Activated naive CD4-positive, alpha-beta T cell treated with anti-CD3 and anti-CD28 coated beads for 36 hours (primary cell): ENCODE measurements at regions of chr6 and their contacts with region 1.

Region 1: GRCh38 chr6:159110013-159110412 is 59.2 kb upstream of the FNDC1 start:
- DNase-seq: peak; percentile 68
- H3K4me3 Mint-ChIP-seq: no peak overlapping the region
- H3K27ac Mint-ChIP-seq: no peak overlapping the region
- H3K4me1 Mint-ChIP-seq: peaks cover 44% of the 10 kb centered on the region
- H3K27me3 Mint-ChIP-seq: no peaks in the 10 kb centered on the region

Region 2: DNA sequence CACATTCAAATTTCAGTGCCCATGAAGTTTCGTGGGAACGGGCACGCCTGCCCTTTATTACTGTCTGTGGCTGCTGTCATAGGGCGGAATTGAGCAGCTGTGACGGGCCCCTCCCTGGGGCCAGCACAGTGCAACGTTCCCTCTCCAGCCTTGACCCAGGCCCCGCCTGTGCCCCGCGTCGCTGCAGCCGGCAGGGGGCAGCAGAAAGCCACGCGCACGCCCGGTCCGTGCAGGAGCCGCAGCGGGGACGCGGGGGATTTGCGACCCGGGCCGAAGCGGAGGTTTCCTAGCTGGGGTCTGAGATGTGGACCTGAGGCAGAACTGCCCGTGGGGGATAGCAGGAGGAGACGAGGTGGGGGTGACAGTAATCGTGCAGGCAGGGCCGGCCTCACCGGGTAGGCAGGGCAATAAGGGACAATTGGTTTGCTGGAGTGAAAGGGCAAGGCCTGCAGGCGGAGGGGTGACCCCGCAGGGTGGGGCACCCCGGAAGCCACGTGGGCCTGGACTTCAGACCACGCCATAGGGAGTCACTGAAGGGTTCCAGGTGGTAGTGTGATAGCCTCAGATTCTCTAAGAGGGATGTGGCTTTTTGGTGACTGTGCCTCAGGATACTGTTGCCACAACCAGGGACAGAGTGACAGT is 405.7 kb before region 1 on chr6:
- CTCF ChIA-PET with region 1: no interaction called
- intact Hi-C with region 1: loop called (anchors 1 kb)
- DNase-seq: peak; percentile 80
- H3K4me3 Mint-ChIP-seq: peak overlapping the region; percentile 58
- H3K27ac Mint-ChIP-seq: no peak overlapping the region
- H3K4me1 Mint-ChIP-seq: peaks cover 15% of the 10 kb centered on the region
- H3K27me3 Mint-ChIP-seq: no peaks in the 10 kb centered on the region

Region 3: DNA sequence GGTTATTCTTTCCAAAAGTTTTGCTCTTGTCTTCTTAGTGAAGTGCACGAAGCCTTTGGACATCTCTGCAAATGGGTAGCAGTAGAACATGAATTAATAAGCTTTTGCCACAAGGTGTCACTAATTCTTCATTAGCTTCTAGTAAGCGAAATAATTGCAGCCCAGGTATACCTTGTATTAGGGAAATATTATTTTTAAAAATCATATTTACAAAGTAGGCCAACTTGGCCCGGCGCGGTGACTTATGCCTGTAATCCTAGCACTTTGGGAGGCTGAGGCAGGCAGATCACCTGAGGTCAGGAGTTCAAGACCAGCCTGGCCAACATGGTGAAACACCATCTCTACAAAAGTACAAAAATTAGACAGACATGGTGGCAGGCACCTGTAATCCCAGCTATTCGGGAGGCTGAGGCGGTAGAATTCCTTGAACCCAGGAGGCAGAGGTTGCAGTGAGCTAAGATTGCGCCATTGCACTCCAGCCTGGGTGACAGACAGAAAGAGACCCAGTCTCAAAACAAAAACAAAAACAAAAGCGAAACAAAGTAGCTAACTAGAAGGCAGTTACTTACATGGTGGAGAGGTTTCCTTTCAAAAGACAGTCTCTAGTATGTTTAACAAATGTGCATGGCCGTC is 101.2 kb before region 1 on chr6:
- CTCF ChIA-PET with region 1: interaction called, 139 read pairs
- intact Hi-C with region 1: loop called (anchors 1 kb)
- DNase-seq: no peak
- H3K4me3 Mint-ChIP-seq: no peak overlapping the region
- H3K27ac Mint-ChIP-seq: no peak overlapping the region
- H3K4me1 Mint-ChIP-seq: peaks cover 29% of the 10 kb centered on the region
- H3K27me3 Mint-ChIP-seq: no peaks in the 10 kb centered on the region

Region 4: GRCh38 chr6:159151266-159151855 is 41.3 kb after region 1 on chr6:
- CTCF ChIA-PET with region 1: interaction called, 10 read pairs
- intact Hi-C with region 1: no loop called
- DNase-seq: peak; percentile 69
- H3K4me3 Mint-ChIP-seq: no peak overlapping the region
- H3K27ac Mint-ChIP-seq: no peak overlapping the region
- H3K4me1 Mint-ChIP-seq: peaks cover 2% of the 10 kb centered on the region
- H3K27me3 Mint-ChIP-seq: peaks cover 2% of the 10 kb centered on the region

Region 5: DNA sequence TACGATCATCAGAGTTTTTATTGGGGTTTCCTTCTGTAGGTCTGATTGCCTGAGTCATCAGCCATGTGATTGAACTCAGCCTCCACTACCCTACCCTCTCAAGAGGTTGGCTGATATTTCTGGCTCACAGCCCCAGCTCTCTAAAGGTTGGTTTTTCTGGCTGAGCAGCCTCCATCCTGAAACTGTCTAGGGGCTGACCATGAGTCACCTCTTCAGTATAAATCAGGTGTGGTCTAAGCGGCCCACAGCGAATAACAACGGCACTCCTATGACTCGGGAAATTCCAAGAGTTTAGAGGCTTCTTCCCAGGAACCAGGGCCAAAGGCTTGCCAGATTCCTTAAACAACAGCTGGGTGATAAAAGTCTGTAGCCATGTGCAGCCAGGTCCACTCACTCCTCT is 467.6 kb after region 1 on chr6:
- CTCF ChIA-PET with region 1: no interaction called
- intact Hi-C with region 1: no loop called
- DNase-seq: no peak
- H3K4me3 Mint-ChIP-seq: no peak overlapping the region
- H3K27ac Mint-ChIP-seq: no peak overlapping the region
- H3K4me1 Mint-ChIP-seq: no peaks in the 10 kb centered on the region
- H3K27me3 Mint-ChIP-seq: peaks cover 21% of the 10 kb centered on the region

Region 6: DNA sequence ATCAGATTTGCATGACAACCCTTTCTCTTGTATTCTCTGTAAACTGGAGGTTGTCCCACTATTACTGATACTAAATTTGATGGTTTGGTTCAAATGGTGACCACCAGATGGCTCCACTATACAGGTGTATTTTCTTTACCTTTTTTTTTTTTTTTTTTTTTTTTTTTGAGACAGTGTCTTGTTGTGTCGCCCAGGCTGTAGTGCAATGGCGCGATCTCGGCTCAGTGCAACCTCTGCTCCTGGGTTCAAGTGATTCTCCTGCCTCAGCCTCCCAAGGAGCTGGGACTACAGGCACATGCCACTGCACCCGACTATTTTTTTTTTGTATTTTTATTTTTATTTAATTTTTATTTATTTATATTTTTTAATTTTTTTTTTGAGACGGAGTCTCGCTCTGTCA is 610.7 kb after region 1 on chr6:
- CTCF ChIA-PET with region 1: no interaction called
- intact Hi-C with region 1: no loop called
- DNase-seq: peak; percentile 67
- H3K4me3 Mint-ChIP-seq: no peak overlapping the region
- H3K27ac Mint-ChIP-seq: no peak overlapping the region
- H3K4me1 Mint-ChIP-seq: peaks cover 37% of the 10 kb centered on the region
- H3K27me3 Mint-ChIP-seq: no peaks in the 10 kb centered on the region

Region 7: DNA sequence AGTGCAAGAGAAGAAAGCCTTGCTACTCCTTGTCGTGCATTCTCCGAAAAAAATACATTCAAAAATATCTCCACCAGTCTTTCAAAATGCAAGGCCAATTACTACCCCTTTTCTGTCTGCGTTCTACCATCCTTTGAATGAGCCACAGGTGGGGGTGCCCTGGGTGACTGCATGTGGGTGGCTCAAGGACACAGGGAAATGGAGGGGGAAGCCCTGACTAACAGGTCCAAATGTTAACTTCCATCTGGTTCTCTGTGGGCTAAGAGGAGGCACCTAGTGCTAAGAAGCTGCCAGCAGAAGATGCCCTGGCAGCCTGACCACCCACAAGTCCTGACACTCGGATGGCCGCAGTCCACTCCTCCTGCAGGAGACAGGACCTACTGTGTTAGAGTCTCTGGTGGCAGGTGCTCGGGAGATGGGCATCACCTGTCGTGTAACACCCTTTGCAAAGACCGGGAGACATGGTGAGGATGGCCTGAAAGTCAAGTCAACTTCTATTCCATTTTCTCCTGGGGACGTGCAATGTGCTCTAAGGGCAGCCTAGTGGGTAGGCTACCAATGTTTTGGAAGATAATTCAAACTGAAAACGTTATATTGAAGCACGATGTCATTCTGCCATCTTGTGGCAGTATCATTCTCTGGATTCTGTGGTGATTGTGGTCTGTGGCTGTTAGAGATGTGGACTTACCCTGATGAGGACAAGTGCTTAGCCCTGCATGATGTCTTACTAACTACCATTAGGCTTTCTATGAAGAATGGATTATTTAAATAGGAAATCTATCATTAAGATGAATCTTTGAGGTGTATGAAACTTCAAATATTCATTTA is 831.5 kb after region 1 on chr6:
- CTCF ChIA-PET with region 1: no interaction called
- intact Hi-C with region 1: no loop called
- DNase-seq: peak; percentile 55
- H3K4me3 Mint-ChIP-seq: no peak overlapping the region
- H3K27ac Mint-ChIP-seq: no peak overlapping the region
- H3K4me1 Mint-ChIP-seq: peaks cover 5% of the 10 kb centered on the region
- H3K27me3 Mint-ChIP-seq: peaks cover under 1% of the 10 kb centered on the region